Mucosa of descending colon (tissue), 3 donors: ENCODE measurements at regions of chr1 and their contacts with region 1.

Region 1: GRCh38 chr1:244970661-244971551 is 106.6 kb upstream of the HNRNPU start:
- DNase-seq: peak; percentile 95 to 97 (median 95)
- ATAC-seq: peak; percentile 90
- H3K4me3 ChIP-seq: peak overlapping the region; percentile 62
- H3K4me1 ChIP-seq: peaks cover 15% of the 10 kb centered on the region
- CTCF ChIP-seq: peak; percentile 56

Region 2: GRCh38 chr1:244740079-244740478 is 230.8 kb before region 1 on chr1:
- intact Hi-C with region 1: no loop called
- DNase-seq: peak in 1 of 3 donors; percentile 9
- ATAC-seq: no peak
- H3K4me3 ChIP-seq: no peak overlapping the region
- H3K4me1 ChIP-seq: no peaks in the 10 kb centered on the region
- CTCF ChIP-seq: no peak

Region 3: GRCh38 chr1:244864253-244865027 is 106.5 kb before region 1 on chr1 and contains the start of gene HNRNPU:
- intact Hi-C with region 1: loop called (anchors 5 to 10 kb)
- DNase-seq: peak; percentile 98 to 99 (median 98)
- ATAC-seq: peak; percentile 90
- H3K4me3 ChIP-seq: peak within 1 kb of the TSS; percentile 100
- H3K4me1 ChIP-seq: peaks cover 26% of the 10 kb centered on the region
- CTCF ChIP-seq: no peak
- total RNA-seq, gene HNRNPU: 197 to 281 (median 260) TPM